Right ventricle myocardium superior (tissue), 1 donor: ENCODE measurements at regions of chr6 and their contacts with region 1.

Region 1: DNA sequence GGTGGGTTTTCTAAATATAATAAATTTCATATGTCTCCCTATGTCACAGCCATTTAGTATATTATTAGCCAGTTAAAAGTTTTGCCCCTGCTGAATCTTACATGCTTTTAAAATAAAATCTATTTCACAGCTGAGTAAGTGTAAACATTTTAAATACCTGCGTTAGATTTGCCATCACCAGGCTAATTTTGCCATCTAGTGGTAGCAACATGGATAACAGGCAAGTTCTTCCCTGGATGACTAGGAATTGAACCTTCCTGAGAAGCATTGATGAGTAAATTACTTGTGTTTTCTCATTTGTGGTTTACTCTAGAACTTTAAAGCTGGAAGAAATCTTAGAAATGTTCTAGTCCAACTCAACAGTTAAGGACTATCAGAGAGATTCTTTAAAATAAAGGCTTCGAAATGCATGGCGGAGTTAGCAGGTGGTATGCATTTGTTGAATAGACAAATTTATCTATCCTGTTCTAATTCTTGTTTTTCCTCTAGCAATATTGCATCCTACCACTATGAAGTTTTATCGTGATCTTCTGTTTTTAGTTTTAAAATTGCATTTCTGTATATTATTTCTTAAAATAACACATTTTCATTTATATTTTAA is 2.6 kb downstream of the PRSS35 start:
- DNase-seq: no peak
- ATAC-seq: no peak

Region 2: DNA sequence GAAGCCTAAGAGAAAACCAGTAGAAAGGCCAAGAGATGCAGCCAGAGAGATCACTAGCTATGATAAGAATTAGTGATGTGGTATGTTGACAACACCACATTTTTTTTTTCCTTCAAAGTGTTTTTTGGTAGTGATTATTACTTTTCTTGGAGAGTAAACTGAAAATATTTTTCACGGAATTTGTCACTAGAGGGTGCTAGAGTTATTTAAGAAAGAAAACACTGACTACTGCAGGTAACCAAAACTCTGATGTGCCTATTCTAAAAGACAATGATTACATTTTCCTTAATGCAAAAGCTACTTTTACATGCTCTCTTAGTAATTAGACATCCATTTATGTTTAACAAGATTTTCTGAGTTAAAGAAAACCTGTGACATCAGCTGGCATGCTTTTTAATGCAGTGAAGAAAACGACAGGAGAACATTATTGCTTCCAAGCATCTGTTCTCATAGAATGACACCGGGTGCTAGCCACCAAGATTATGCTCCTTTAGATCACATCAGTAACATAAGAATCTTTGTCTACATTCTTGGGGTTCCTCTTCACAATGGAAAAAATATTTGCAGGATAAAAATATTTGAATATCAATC is 293.0 kb before region 1 on chr6:
- intact Hi-C with region 1: loop called (anchors 5 kb)
- DNase-seq: no peak
- ATAC-seq: no peak

Region 3: DNA sequence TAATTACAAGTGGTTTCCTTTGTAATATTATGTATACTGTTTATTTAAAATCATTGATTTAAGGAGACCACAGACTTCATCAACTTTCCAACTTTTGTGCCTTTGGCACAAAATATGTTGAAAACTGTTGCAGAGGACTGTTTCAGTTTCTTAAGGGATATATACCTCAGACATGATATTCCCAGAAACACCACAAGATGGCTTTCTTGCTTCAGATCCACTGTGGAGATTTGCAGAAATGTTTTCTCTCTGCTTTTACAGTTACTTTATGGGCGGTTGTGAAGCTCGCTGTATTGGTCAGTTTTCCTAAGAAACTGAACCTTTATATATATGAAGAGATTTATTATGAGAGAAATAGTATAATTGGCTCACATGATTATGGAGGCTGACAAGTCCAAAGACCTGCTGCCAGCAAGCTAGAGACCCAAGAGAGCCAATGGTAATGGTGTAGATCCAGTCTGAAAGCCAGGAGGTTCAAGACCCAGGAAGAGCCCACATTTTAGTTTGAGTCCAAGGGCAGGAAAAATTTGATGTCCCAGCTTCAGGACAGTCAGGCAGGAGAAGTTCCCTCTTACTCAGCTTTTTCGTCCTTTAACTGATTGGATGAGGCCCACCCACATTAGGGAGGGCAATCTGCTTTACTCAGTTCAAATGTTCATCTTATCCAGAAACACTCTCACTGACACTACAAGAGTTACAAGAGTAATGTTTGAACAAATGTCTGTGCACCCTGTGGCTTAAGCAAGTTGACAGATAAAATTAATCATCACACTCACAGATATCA is 96.9 kb before region 1 on chr6:
- intact Hi-C with region 1: loop called (anchors 5 kb)
- DNase-seq: no peak
- ATAC-seq: peak; percentile 80